Right ventricle myocardium superior (tissue), 1 donor: ENCODE measurements at regions of chr10 and their contacts with region 1.

Region 1: DNA sequence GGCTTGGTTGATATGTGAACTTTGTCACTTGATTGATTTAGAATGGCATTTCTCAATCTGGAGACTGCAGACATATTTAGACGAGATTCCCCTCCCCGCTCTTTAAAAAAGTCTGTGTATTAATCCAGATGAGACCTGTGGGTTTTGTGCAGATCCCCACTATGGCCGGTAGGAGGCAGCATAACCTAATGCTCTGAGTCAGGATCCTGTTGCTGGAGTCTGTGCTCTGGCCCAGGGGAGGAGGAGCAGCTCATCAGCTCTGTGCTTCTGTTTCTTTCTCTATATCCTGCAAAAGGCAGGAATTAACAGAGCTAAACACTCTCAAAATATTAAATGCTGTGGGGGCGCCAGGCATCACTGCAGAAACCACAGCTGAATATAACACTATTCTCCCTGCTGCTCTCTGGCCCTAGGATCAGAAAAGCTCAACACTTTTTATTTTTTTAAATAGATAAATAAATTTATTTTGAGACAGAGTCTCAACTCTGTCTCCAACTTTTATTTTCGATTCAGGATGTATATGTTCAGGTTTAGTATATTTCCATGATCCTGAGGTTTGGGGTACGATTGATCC is 23.9 kb upstream of the SEPHS1 start:
- DNase-seq: peak; percentile 59
- ATAC-seq: peak; percentile 91

Region 2: DNA sequence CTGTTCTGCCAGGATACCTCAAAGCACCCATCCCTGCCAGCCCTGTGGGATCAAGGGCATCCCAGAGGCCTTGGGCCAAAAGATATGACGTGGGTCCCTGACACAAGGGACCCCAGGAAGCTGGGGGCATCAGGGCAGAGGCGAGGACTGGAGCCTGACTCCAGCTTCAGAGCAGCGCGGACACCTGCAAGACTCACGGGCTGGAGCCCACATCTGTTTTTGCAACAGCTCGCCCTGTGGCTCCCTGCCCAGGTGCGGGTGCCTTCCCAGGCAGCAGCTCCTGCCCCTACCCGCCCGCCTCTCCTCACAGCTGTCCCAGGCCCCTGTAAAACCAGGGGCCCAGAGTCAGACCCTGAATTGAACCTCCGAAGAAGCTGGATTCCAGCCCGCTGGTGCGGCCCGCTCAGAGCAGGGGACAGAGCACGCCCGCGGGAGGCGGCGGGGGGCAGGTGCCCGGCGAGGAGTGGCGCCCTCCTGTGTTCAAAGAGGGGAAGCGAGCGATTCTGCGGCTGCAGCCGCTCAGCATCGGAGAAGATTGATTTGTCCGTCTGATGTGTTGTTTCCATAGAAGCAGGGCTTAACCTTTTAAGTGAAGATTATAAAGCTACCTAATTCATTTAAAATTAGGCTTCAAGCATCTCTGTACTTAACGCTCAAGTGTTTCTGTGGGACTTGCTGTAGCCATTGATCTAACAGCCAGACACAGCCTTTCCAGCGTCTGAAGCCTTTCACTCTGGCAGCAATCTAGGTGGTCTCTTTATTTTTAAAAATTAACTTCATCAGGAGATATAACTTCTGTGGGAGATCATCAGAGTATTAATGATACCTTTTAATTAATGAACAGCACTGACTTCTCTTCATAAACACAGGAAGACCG is 68.4 kb after region 1 on chr10:
- intact Hi-C with region 1: loop called (anchors 5 kb)
- DNase-seq: peak; percentile 56
- ATAC-seq: peak; percentile 87

Region 3: DNA sequence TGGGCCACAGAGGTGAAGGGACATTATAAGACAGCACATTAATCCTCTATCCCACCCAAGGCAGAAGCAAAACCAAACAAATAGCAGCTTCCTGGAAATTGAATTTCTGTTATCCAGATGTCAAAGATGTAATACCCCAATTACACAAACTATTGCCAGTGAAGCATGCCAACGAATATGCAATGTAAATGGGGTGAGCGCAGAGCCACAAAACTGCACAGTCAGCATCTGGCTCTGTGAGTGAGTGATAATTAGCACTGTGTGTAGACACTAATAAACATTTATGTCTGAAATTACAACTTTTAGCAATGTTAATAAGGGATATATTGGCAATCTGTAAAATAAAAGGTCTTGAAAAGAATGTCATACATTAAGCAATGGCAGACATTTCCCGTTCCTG is 153.7 kb after region 1 on chr10:
- intact Hi-C with region 1: no loop called
- DNase-seq: no peak
- ATAC-seq: no peak

Region 4: GRCh38 chr10:13536674-13537366 is 164.8 kb after region 1 on chr10:
- intact Hi-C with region 1: loop called (anchors 5 kb)
- DNase-seq: peak; percentile 55
- ATAC-seq: peak; percentile 79

Region 5: DNA sequence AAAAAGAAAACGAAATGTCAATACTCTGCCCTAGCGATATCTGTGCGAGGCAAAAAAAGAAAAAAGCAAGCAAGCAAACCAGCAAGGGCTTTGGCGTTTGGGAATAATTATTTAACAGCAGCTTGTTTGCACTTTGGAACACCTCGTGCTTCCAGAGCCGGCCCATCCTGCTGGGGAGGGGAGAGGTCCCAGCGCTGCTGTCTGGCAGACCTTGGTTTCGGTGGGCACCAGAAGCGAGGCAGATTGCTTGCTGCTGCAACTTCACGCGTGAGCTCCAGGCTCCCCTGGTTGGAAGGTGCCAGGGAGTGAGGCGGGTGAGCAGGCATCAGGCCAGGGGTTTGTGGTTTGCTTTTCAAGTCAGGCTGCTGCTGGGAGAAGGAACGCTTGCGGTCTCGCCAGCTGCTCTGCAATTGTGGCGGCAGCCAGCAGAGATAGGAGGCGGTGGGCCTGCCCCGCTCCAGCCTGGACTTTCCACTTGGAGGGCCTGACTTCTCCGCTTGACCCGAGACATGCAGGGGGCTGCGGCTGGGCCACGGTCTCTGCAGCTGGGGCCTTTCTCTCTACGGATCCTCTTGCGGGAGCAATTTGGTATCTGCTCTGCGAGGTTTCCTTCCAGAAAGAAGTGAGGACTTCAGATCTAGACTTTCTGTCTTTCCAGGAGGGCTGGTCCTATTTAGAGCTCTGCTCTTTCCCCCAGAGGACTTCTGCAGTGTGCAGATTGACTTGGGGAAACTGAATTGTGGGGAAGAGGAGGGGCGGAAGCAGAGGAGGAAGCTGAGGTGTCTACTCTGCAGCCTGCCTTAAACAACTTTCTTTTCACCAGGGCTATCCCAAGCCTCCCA is 346.2 kb after region 1 on chr10:
- intact Hi-C with region 1: no loop called
- DNase-seq: peak; percentile 91
- ATAC-seq: peak; percentile 89